Astrocyte of the cerebellum (primary cell): ENCODE measurements at regions of chr2 and their contacts with region 1.

Region 1: DNA sequence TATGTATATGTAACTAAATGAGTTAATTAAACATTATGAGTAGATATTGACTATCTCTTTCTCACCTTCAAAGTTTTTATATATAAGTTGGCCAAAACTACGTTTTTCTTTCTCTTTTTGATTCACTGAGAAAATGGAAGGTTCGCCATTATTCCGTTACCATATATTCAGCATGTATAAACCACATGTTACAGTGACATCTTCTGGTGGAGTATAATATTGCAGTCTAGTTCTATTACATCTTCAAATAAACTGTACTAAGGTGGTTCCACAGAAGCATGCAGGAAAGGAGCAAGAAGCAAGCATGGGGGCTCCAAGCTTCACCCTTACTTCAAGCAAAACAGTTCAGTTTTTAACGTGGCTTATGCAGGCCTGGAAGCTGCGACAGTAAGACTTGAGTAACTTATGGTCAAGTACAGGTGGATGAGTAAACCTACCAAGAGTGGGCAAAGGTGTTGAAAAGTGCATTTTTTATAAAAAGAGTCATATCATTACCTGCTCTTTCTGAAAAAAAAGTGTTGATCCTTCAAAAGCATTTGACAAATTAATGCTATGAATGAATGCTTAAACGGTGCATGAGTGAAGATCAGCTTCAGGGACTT is 129.8 kb upstream of the RAB6C start:
- DNase-seq: peak; percentile 83
- H3K4me3 ChIP-seq: no peak overlapping the region
- CTCF ChIP-seq: peak; percentile 47

Region 2: DNA sequence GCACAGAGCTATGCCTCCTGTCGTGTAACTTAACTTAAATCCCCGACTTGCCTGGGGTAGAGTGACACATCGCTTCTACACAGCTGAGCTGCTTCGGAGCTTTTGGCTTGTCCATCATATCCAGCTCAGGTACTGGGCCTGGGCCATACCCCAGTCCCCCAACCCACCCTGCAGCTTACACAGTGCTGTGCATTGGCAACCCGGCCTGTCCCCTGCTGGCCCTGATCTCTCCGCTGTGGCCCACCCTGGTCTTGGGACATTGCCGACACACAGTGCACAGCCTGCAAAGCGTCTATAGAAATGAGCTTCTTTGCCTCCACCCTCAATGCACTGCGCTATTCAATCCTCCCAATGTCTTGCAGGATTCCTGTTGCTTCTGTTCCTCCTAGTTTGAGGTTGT is 213.0 kb before region 1 on chr2:
- in situ Hi-C with region 1: no loop called
- DNase-seq: no peak
- H3K4me3 ChIP-seq: no peak overlapping the region
- CTCF ChIP-seq: no peak

Region 3: DNA sequence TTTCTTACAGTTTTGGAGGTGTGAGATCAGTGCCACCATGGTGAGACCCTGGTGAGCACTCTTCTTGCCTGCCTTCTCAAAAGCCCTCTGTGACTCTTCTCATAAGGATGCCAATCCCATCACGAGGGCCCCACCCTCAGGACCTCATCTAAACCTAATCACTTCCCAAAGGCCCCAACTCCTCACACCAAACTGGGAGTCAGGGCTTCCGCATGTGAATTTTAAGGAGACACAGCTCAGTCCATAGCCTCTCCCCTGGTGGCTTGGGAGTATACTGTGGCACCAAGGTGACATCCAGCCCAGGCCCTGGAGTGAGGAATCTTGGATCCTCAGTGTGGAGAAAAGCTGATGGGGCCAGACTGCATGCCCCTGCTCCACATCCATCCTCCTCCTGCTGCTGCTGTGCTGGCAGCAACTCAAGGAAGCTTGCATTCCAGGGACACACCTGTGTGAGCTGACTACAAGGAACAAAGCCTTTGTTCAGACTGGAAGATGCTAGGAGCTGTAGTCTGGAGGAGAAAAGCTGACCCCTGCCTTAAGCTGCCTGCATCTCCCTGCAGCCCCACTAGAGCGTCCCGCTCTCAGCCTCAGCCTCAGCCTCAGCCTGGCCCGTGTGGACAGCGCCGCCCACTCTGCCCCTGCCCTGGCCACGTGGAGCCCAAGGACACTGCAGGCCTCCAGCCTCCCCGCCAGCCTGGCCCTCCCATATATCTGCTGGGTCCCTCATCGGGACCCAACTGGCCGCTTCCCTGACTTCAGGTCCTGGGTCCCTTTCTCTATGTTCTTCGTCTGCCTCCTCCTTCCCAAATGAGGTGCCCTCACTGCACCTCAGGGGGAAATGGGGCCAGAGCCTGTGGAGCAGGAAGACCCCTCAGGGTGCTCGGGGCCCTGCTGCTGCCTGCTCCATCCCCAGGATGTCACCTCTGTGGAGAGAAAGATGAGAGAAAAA is 42.0 kb after region 1 on chr2:
- in situ Hi-C with region 1: loop called (anchors 5 kb)
- DNase-seq: no peak
- H3K4me3 ChIP-seq: no peak overlapping the region
- CTCF ChIP-seq: no peak